Astrocyte of the cerebellum (primary cell): ENCODE measurements at regions of chr1 and their contacts with region 1.

Region 1: DNA sequence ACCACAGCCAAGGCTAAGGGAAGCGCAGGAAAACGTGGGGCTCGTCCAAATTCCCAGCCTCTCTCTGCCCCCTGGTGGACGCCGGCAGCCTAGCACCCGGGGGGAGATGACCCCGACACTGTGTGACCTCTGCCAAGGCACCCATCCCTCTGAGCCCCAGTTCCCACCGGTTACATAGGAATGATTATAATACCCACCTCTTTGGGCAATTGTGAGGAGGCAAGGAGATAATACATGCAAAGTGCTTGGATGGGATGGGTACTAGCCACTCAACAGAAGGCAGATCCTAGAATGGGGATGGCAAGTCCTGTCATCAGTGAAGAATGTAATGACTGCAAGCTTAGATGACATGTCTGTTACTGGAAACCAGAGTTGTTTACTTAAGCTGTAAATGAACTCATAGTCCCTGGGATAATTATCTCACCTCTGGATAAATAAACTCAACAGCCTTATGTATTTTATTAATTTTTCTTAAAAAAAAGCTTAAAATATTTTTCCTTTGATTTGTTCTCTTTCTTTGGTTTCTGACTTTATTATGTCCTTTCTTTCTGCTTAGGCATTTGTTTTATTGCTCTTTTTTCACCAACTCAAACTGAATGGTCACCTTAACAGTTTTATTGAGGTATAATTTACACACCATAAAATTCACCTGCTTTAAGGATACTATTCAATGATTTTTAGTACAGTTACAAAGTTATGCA is 11.3 kb upstream of the BMP8B start:
- DNase-seq: no peak
- H3K4me3 ChIP-seq: no peak overlapping the region
- CTCF ChIP-seq: peak; percentile 65

Region 2: GRCh38 chr1:39835935-39836594 is 36.1 kb after region 1 on chr1:
- in situ Hi-C with region 1: loop called (anchors 5 kb)
- DNase-seq: no peak
- H3K4me3 ChIP-seq: no peak overlapping the region
- CTCF ChIP-seq: no peak

Region 3: DNA sequence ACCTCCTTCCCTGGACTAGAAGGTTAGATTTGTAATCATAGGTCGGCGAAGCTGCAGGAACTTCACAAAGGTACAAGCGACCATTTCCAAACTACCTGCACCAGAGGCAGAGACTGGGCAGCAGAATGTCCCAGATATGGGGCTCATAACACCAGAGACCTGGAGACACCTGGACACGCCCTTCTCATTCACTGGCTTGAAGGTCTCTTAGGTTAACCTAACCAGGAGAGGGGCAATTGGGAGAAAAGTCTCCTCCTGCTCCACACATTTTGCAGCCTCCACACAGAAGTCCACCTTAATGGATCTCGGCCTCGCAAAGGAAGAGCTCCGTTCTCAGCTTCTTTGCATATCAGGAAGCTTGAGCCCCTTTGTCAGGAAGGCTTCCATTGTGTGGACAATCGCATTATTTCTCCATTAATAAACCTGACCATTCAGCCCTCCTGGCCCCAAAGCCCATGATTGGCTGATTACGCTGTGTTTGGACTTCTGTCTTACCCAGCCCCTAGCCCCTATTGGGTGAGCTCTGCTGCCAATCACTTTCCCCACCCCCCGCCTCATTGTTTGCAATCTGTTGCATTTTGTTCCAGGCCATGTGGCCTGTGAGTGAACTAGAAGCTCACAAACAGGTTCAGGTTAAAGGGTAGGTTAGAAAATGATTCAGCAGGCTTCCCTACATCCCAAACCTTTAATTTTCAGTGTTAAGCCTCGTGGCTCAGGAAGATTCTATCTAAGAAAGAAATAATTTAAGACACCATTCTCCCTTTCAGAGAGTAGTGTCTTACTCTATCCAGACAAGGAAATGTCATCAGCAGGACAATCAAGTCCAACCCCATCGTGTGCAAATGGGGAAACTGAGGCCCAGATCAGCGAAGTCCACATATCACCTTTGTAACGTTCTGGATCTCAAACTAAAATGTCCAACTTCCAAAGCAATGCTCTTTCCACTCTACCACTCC is 99.0 kb after region 1 on chr1:
- in situ Hi-C with region 1: loop called (anchors 5 kb)
- DNase-seq: peak; percentile 23
- H3K4me3 ChIP-seq: no peak overlapping the region
- CTCF ChIP-seq: no peak